Natural killer cell (primary cell): ENCODE measurements at regions of chr22 and their contacts with region 1.

Region 1: DNA sequence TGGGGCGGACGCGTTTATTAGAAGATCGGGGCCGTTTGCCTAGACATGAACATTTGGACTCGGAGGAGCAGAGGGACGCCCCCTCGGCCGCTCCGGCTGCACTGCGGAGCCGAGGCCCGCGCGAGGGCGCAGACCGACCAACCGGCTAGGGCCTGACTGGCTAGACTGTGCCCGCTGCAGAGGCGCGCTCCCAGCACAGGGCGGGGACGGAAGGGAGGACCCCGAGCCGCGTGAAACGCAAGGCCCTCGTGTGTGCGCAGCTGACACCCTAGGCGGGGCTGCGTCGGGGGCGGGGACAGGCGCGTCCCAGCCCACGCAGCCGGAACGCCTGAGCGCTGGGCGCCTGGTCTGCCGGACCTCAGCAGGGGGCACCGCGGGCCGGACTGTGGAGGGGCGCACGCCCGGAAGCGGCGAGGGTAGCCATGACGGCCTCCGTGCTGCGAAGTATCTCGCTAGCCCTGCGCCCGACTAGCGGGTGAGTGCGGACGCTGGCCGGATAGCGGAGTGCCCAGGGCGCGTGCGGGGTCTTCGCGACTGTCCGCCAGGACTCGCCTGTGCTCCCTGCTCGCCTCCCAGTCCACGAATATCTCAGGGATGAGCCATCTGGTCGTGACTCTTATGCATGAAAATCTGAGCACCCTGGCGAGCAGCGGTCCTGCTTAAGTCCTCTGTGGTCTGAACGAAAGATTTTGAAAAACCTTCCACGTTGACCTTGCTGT is at the start of gene MRPL40:
- DNase-seq: peak; percentile 82 to 91
- ATAC-seq: peak; percentile 80 to 94 (median 82)
- H3K4me3 ChIP-seq: peak within 1 kb of the TSS; percentile 95
- H3K4me3 Mint-ChIP-seq: peak within 1 kb of the TSS; percentile 97
- H3K27ac ChIP-seq: peak within 1 kb of the TSS; percentile 97
- H3K27ac Mint-ChIP-seq: peak within 1 kb of the TSS; percentile 93 to 100
- H3K4me1 ChIP-seq: peaks cover 40% of the 10 kb centered on the region
- H3K4me1 Mint-ChIP-seq: peaks cover 28 to 37% of the 10 kb centered on the region in 2 donors
- H3K27me3 ChIP-seq: no peaks in the 10 kb centered on the region
- H3K27me3 Mint-ChIP-seq: no peaks in the 10 kb centered on the region
- CTCF ChIP-seq: no peak
- total RNA-seq, gene MRPL40: 11.6 to 16.7 (median 14.2) TPM

Region 2: GRCh38 chr22:19240813-19241592 is 191.3 kb before region 1 on chr22:
- intact Hi-C with region 1: no loop called
- DNase-seq: no peak
- ATAC-seq: no peak
- H3K4me3 ChIP-seq: no peak overlapping the region
- H3K4me3 Mint-ChIP-seq: no peak overlapping the region
- H3K27ac ChIP-seq: no peak overlapping the region
- H3K27ac Mint-ChIP-seq: no peak overlapping the region
- H3K4me1 ChIP-seq: no peaks in the 10 kb centered on the region
- H3K4me1 Mint-ChIP-seq: no peaks in the 10 kb centered on the region
- H3K27me3 ChIP-seq: no peaks in the 10 kb centered on the region
- H3K27me3 Mint-ChIP-seq: peaks cover 0 to 16% of the 10 kb centered on the region in 2 donors
- CTCF ChIP-seq: no peak

Region 3: DNA sequence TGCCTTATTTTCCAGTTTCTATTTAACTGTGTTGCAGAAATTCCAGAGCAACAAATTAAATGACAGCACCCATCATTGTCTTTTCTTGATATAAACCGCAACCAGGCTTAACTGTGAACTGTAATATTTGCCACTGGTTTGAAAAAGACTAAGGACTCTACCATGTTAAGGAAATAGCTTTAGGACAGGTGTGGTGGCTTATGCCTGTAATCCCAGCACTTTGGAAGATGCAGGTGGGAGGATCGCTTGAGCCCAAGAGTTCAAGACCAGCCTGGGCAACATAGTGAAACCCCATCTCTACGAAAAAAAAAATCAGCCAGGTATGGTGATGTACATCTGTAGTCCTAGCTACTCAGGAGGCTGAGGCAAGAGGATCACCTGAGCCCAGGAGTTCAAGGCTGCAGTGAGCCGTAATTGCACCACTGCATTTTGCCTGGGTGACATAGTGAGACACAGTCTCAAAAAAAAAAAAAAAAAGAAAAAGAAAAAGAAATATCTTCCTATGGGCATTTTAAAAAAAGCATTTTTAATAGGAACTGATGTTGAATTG is 29.6 kb before region 1 on chr22:
- intact Hi-C with region 1: loop called (anchors 1 kb)
- DNase-seq: no peak
- ATAC-seq: no peak
- H3K4me3 ChIP-seq: no peak overlapping the region
- H3K4me3 Mint-ChIP-seq: no peak overlapping the region
- H3K27ac ChIP-seq: no peak overlapping the region
- H3K27ac Mint-ChIP-seq: peak overlapping the region; percentile 2 to 3
- H3K4me1 ChIP-seq: no peaks in the 10 kb centered on the region
- H3K4me1 Mint-ChIP-seq: peaks cover 16 to 37% of the 10 kb centered on the region in 2 donors
- H3K27me3 ChIP-seq: no peaks in the 10 kb centered on the region
- H3K27me3 Mint-ChIP-seq: no peaks in the 10 kb centered on the region
- CTCF ChIP-seq: no peak

Region 4: DNA sequence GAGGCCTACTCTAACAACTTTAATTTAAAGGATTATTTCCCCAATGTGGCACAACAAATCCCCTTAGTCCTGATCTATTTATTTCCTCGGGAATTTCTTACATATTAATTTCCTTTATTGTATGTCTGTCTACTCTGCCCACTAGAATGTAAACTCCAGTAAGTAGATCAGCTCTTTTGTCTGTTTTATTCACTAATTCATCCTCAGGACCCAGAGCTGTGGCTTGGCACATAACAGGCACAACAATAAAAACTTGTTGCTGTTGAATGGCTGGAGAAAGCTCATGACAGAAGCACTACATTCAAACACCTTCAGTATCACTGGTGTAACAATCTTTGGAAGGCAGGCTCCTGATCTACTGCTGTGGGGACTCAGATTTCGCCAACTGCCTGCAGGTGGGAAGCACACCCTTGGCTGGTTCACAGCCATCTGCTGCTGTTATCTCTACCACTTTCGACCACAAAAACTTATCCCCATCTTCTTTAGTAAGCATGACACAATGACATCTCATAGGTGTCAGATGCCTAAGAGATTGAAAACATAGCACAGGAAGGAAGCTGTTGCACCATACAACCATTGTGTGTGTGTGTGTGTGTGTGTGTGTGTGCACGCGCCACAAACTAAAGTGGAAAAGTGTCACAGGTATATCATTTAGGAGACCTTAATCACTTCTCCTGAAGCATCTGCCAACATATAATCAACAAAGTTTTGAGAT is 12.7 kb before region 1 on chr22:
- intact Hi-C with region 1: loop called (anchors 1 kb)
- DNase-seq: peak; percentile 64 to 83
- ATAC-seq: peak; percentile 85 to 93 (median 90)
- H3K4me3 ChIP-seq: no peak overlapping the region
- H3K4me3 Mint-ChIP-seq: peak overlapping the region; percentile 87
- H3K27ac ChIP-seq: peak overlapping the region; percentile 96
- H3K27ac Mint-ChIP-seq: peak overlapping the region; percentile 87 to 100
- H3K4me1 ChIP-seq: peaks cover 71% of the 10 kb centered on the region
- H3K4me1 Mint-ChIP-seq: peaks cover 87 to 90% of the 10 kb centered on the region in 2 donors
- H3K27me3 ChIP-seq: no peaks in the 10 kb centered on the region
- H3K27me3 Mint-ChIP-seq: no peaks in the 10 kb centered on the region
- CTCF ChIP-seq: no peak

Region 5: DNA sequence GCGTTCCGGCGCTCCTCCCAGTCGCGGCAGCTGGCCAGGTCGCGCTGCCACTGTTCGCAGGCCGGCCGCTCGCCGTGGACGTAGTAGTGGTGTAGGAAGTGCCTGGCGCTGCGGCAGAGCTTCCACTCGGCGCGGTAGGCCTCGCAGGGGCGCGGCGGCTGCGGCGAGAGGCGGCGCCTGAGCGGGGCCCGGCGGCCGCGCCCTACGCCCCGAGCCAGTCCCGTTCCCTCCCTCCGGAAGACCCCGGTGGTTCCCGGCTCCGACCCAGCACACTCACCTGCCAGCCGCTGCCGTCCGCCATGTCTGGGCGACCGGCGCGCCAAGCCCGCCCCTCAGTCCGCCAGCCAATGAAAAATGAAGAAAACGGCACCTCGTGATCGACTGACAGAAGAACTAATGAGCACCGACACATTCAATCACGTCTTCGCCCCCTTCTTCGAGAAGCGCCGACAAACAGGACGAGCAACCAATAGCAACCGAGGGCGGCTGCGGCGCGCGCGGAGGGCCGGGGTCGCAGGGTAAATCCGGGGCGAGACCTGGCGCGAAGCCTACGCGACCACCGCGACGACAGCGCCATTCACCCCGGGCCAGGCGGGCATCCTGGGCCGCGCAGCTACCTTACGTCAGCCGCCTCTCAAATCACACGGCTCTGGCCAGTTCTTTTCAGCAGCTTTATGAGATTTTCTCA is 15.2 kb after region 1 on chr22 and contains the start of gene C22orf39:
- intact Hi-C with region 1: loop called (anchors 1 kb)
- DNase-seq: peak; percentile 81 to 94
- ATAC-seq: peak; percentile 91 to 95 (median 92)
- H3K4me3 ChIP-seq: peak within 1 kb of the TSS; percentile 71
- H3K4me3 Mint-ChIP-seq: peak within 1 kb of the TSS; percentile 96
- H3K27ac ChIP-seq: peak within 1 kb of the TSS; percentile 97
- H3K27ac Mint-ChIP-seq: peak within 1 kb of the TSS; percentile 83 to 95
- H3K4me1 ChIP-seq: peaks cover 30% of the 10 kb centered on the region
- H3K4me1 Mint-ChIP-seq: peaks cover 33 to 36% of the 10 kb centered on the region in 2 donors
- H3K27me3 ChIP-seq: no peaks in the 10 kb centered on the region
- H3K27me3 Mint-ChIP-seq: no peaks in the 10 kb centered on the region
- CTCF ChIP-seq: no peak
- total RNA-seq, gene C22orf39: 45.4 to 53.3 (median 50.2) TPM